Ovary (tissue), 10 donors: ENCODE measurements at regions of chr5 and their contacts with region 1.

Region 1: DNA sequence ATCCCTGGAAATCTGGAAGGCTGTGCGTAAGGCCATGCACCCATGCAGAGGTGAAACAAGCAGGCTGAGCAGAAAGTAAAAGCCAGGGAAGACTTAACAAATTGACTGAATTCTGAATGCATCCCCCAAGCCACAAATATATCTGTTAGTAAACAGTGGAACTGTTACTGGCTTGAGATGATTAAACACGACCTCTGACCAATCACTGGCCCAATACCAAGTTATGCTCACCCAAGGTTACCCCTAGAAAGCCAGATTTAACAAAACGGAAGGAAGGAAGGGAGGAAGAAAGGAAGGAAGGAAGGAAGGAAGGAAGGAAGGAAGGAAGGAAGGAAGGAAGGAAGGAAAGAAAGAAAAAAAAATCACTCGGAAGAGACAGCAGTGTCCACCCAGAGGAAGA is 215.8 kb upstream of the CCNG1 start:
- DNase-seq: no peak
- H3K4me3 ChIP-seq: no peak overlapping the region
- H3K27ac ChIP-seq: no peak overlapping the region
- H3K4me1 ChIP-seq: no peaks in the 10 kb centered on the region
- H3K27me3 ChIP-seq: no peaks in the 10 kb centered on the region
- CTCF ChIP-seq: no peak
- EP300 ChIP-seq: no peak
- POLR2A ChIP-seq: no peak

Region 2: DNA sequence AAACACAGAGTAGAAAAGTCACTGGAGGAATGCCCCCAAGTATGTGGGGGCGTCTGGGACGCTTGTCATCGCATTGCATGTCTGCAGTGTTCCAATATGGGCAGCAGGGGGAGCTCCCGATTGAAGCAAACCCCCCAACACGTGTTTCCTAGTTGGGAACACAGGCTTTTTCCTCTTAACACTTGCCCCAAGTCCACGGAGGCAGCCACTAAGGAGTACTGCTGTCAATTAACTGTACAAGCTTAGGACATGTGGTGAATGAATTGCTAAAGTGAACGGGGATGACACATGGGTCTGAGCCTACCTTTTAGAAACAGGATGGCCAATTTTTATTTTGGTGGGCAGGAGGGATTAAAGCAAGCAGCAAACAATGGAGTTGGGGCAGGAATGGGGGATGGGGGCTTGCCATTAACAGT is 1677.2 kb before region 1 on chr5:
- intact Hi-C with region 1: loop called in 1 of 4 experiments (anchors 5 kb)
- DNase-seq: no peak
- H3K4me3 ChIP-seq: no peak overlapping the region
- H3K27ac ChIP-seq: no peak overlapping the region
- H3K4me1 ChIP-seq: peaks cover 1% of the 10 kb centered on the region
- H3K27me3 ChIP-seq: no peaks in the 10 kb centered on the region
- CTCF ChIP-seq: no peak
- EP300 ChIP-seq: no peak
- POLR2A ChIP-seq: no peak

Region 3: DNA sequence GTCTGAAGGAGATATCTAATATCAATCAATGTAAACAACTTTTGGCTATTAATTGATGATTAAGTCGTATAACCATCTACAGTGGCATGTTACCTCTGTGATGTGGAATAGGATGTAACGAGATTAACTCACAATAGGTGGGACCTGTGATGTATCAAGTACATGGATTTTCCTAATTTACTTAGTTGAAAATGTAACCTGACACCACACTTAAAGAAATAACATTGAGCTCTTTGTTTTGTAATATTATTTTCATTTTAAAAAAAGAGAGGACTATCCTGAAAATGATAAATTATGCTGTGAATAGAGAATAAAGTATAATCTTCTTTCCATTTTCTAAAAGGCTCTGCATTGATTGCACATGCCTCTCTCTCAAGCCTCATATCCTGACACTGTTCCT is 97.4 kb before region 1 on chr5:
- intact Hi-C with region 1: no loop called
- DNase-seq: no peak
- H3K4me3 ChIP-seq: no peak overlapping the region
- H3K27ac ChIP-seq: no peak overlapping the region
- H3K4me1 ChIP-seq: no peaks in the 10 kb centered on the region
- H3K27me3 ChIP-seq: no peaks in the 10 kb centered on the region
- CTCF ChIP-seq: no peak
- EP300 ChIP-seq: no peak
- POLR2A ChIP-seq: no peak

Region 4: GRCh38 chr5:163193886-163194285 is 27.7 kb before region 1 on chr5:
- intact Hi-C with region 1: loop called in 1 of 4 experiments (anchors 2 kb)
- DNase-seq: no peak
- H3K4me3 ChIP-seq: no peak overlapping the region
- H3K27ac ChIP-seq: no peak overlapping the region
- H3K4me1 ChIP-seq: no peaks in the 10 kb centered on the region
- H3K27me3 ChIP-seq: no peaks in the 10 kb centered on the region
- CTCF ChIP-seq: no peak
- EP300 ChIP-seq: no peak
- POLR2A ChIP-seq: no peak